ENCODE measurements at regions of chr15 and their contacts with region 1.

Region 1: GRCh38 chr15:78077058-78077877 is at the start of gene TBC1D2B:
- DNase-seq: peak in 1 of 2 donors; percentile 75
- H3K4me3 ChIP-seq: peak within 1 kb of the TSS; percentile 91 to 94
- H3K27ac ChIP-seq: peak within 1 kb of the TSS; percentile 90 to 93
- H3K4me1 ChIP-seq: peaks cover 0 to 36% of the 10 kb centered on the region in 2 donors
- H3K27me3 ChIP-seq: no peaks in the 10 kb centered on the region
- CTCF ChIP-seq: no peak
- total RNA-seq, gene TBC1D2B: 63.3 TPM

Region 2: DNA sequence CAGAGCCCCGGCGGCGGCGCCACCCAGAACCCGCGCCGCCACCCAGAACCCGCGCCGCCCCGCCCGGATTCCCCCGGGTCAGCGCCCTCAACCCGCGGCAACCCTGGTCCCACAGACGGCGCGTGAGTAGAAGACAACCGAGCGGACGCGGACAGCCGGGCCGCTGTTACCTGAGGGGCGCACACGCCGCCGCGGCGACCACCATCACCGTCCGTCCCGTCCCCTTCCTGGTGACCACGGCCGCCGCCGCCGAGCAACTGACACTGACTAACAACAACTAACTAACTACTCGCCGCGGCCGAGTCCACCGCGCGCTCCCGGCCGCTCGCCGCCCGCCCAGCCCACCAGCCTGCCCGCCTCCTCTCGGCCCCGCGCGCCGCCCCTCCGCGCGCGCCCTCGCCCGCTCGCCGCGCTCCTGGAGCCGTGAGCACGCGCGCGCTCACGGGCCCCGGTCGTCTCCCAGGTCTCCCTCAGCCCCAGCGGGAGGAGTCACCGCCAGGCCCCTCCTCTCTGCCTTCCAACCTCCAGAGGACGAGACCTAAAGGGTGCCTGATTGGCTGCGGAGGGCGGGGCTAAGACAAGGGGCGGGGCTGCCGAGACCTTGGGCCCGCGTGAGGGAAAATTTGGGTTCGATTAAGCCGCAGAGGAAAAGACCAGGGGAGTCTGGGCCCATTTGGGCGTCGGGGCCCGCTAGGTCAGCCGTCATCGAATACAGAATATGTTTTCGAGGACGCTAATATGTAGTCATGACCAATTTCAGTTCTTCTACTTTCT is 657.2 kb before region 1 on chr15 and contains the start of gene PEAK1:
- intact Hi-C with region 1: loop called (anchors 10 kb)
- DNase-seq: peak; percentile 99 to 100
- H3K4me3 ChIP-seq: peak within 1 kb of the TSS; percentile 76 to 99
- H3K27ac ChIP-seq: peak within 1 kb of the TSS; percentile 91 to 97
- H3K4me1 ChIP-seq: peaks cover 0 to 20% of the 10 kb centered on the region in 2 donors
- H3K27me3 ChIP-seq: no peaks in the 10 kb centered on the region
- CTCF ChIP-seq: no peak
- total RNA-seq, gene PEAK1: 53.7 TPM

Region 3: DNA sequence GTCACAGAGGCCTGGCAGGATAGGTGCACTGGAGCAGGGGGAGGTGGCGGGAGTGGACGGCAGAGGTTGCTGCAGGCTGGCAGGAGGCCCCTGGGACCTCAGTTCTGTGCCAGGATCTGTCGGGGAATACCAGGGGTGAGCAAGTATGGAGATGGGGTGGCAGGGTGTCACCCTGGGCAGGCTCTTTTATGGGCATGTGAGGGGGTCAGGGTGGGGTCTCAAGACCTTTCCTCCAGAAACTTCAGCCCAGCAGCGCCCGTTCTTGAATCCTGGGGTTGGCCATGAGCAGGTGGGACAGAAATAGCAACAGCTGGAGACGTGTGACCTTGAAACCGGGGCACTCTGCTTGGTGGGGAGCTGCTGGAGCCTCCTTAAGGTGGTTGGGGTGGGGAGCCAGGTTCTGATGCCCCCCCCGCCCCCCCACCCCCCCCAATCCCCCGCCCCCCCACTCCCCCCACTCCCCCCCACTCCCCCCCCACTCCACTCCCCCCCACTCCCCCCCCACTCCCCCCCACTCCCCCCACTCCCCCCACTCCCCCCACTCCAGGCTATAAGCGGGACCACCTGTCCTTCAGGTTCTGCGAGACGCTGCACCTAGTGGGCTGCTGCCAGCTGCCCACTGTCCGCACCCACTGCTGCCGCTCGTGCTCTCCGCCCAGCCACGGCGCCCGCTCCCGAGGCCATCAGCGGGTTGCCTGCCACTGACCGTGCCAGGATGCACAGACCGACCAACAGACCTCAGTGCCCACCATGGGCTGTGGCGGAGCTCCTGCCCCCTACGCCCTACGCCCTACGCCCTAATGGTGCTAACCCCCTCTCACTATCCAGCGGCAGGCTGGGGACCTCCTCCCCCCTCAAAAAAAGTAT is 84.7 kb before region 1 on chr15:
- intact Hi-C with region 1: loop called (anchors 5 kb)
- DNase-seq: no peak
- H3K4me3 ChIP-seq: no peak overlapping the region
- H3K27ac ChIP-seq: peak overlapping the region; percentile 89 to 94
- H3K4me1 ChIP-seq: peaks cover 21 to 48% of the 10 kb centered on the region in 2 donors
- H3K27me3 ChIP-seq: no peaks in the 10 kb centered on the region
- CTCF ChIP-seq: no peak

Region 4: DNA sequence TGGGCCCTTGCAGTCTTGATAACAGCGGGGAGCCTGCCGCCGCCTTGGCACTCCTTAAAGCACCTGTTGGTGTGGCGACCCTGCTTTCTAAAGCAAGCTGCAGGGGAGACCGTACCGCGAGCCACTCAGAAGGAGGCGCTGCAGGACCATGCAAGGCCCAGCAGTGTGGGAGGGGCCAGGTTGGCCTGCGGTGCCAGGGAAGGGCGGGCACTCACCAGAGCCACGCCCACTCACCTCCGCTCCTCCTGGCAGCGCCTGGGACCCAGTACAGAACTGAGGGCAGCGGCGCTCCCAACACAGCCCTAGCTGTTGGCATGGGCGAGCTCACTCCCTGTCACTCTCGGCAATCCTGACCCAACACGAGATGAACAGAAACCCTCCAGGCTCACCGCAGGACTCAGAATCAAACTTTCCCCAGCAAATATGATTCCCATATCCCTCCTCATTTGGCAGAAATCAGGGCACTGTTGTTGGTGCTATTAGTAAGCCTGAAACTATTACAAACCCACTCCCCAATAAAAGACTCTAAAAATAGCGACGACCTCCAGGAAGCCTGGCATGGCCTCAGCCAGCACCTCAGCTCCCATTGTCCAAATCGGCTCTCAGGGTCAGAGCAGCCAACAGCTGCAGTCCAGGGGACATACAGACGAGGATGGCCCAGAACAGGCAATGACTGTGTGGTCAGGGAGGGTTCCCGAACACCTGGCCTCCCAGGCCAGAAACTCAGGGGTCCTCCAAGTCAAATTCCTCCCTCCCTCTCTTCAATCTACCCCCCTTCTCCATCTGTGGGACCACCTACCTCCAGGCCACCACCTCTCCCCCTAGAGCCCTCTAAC is 77.0 kb before region 1 on chr15:
- intact Hi-C with region 1: loop called (anchors 1 kb)
- DNase-seq: no peak
- H3K4me3 ChIP-seq: no peak overlapping the region
- H3K27ac ChIP-seq: no peak overlapping the region
- H3K4me1 ChIP-seq: peaks cover 9 to 21% of the 10 kb centered on the region in 2 donors
- H3K27me3 ChIP-seq: no peaks in the 10 kb centered on the region
- CTCF ChIP-seq: peak in 1 of 3 experiments; percentile 26

Region 5: DNA sequence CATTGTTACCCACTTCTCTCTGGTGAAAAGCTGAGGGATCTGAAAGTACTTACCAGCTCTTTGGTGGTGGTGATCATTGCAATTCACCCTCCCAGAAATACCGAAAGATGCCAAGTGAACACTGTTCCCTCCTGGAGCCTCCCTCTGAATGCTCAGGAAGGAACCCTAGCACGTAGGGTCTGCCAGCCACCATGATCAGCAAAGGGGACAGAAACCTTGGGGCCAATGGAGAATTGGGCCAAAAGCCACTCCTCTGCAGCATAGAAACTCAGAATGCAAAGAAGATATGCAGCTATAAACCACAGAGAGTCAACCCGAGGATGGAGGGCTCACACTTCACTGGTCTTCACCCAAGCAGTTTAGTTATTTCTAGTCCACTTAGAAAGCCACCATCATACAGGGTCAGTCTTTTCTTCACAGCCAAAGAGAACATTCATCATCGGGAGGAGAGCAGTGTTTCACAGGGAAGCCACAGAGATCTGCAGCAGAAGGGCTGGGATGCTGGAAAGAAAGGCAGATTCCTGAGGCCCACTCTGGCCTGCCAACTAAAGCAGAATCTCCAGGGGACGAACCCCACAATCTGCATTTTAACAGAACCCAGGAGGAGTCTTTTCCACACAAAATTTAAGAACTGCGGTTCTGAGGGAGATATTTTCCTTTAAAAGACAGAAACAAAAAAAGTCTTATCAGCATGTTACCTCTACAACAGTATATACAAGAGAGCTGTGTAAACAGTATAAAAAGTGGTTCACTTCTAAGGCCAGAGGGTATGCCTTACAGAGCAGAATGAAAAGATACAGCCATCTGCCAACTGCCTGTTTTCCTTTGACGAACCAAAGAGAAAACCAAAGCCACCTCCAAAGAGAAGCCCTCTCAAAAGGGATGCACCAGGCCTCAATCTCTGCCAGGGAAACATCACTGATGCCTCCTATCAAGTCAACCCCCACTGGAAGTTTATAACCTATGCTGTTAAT is 11.0 kb before region 1 on chr15:
- intact Hi-C with region 1: loop called (anchors 1 kb)
- DNase-seq: peak in 1 of 2 donors; percentile 60
- H3K4me3 ChIP-seq: peak overlapping the region; percentile 6 to 27
- H3K27ac ChIP-seq: peak overlapping the region; percentile 71 to 83
- H3K4me1 ChIP-seq: peaks cover 42 to 83% of the 10 kb centered on the region in 2 donors
- H3K27me3 ChIP-seq: no peaks in the 10 kb centered on the region
- CTCF ChIP-seq: no peak

Region 6: DNA sequence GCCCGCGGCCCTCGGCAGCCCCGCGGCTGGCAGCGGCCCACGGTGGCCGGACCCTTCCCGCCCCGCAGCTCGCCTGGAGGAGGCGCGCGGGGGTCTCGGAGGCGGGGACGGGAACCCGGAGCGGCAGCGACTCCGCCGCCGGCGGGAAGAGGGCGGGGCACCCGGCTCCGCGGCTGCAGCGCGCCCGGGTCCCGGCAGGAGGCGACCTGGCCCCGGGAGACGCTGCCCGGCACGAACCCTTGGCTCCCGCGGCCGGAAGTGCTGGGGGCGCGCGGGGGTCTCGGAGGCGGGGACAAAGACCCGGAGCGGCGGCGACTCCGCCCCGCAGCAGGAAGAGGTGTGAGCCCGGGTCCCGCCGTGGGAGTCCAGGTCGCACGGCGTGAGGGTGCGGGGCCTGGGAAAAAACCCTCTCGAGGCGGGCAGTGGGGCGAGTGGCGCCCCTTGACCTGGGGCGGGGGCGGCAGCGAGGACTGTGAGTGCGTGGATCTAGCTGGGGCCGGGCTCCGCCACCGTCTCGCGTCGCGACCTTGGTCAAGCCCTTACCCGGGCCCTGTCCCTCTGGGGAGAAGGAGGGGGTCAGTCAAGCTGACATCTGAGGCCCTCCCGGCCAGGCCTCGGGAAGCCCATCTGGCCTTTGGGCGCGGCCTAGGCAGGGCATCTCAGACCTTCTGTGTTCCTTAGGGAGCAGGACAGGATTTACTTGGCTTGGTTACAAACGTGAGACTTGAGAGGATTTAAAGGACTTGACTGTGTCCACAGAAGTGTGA is 54.2 kb after region 1 on chr15 and contains the start of gene CIB2:
- intact Hi-C with region 1: loop called (anchors 2 kb)
- DNase-seq: peak in 1 of 2 donors; percentile 83
- H3K4me3 ChIP-seq: peak within 1 kb of the TSS; percentile 53 to 71
- H3K27ac ChIP-seq: peak within 1 kb of the TSS; percentile 71 to 79
- H3K4me1 ChIP-seq: peaks cover 0 to 12% of the 10 kb centered on the region in 2 donors
- H3K27me3 ChIP-seq: no peaks in the 10 kb centered on the region
- CTCF ChIP-seq: peak; percentile 56 to 91 (median 67)
- total RNA-seq, gene CIB2: 6.7 TPM

Region 7: DNA sequence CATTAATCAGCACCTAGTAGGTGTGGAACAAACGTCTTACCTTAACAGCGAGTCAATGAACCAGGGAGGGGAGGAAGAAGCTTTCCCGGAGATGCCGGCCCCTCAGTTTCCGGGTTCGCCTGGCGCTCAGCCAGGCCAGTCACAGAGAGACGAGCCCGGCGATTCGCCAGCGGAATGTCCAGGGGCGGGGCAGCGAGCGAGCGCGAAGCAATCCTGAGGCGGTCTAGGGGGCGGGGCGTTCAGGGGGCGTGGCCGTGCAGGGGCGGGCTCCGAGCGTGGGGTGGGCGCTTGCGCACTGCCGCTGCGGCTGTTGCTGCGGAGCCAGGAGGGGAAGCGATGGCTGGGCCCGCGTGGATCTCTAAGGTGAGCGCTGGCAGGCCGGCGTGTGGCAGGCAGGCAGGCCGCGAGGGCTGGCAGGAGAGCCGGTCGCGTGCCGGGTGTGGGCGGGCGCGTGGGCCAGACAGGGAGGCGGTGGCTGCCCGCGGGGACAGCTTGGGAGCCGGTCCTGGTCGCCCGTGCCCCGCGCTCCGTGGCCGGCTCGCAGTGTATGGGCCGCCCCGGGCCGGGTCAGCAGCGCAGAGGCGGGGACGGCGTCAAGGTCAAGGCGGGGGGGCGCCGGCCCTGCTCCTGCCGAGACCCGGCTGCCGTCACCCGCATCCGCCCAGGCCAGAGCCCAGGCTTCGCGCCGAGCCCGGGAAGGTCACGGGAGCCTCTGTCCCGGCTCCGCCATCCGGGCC is 72.0 kb after region 1 on chr15 and contains the start of gene IDH3A:
- intact Hi-C with region 1: loop called (anchors 5 kb)
- DNase-seq: peak; percentile 91 to 99
- H3K4me3 ChIP-seq: peak within 1 kb of the TSS; percentile 79 to 90
- H3K27ac ChIP-seq: peak within 1 kb of the TSS; percentile 81 to 87
- H3K4me1 ChIP-seq: peaks cover 5 to 14% of the 10 kb centered on the region in 2 donors
- H3K27me3 ChIP-seq: no peaks in the 10 kb centered on the region
- CTCF ChIP-seq: no peak
- total RNA-seq, gene IDH3A: 17.7 TPM

Region 8: GRCh38 chr15:78415286-78415685 is 338.0 kb after region 1 on chr15:
- intact Hi-C with region 1: no loop called
- DNase-seq: no peak
- H3K4me3 ChIP-seq: no peak overlapping the region
- H3K27ac ChIP-seq: no peak overlapping the region
- H3K4me1 ChIP-seq: no peaks in the 10 kb centered on the region
- H3K27me3 ChIP-seq: no peaks in the 10 kb centered on the region
- CTCF ChIP-seq: no peak